Esophagus muscularis mucosa (tissue), 4 donors: ENCODE measurements at regions of chr6 and their contacts with region 1.

Region 1: GRCh38 chr6:46090115-46091079 is 39.4 kb upstream of the ENPP4 start:
- DNase-seq: no peak
- H3K4me3 ChIP-seq: no peak overlapping the region
- H3K27ac ChIP-seq: no peak overlapping the region
- H3K4me1 ChIP-seq: no peaks in the 10 kb centered on the region
- H3K27me3 ChIP-seq: no peaks in the 10 kb centered on the region
- CTCF ChIP-seq: peak; percentile 67 to 78 (median 76)
- EP300 ChIP-seq: no peak
- POLR2A ChIP-seq: no peak

Region 2: GRCh38 chr6:46410334-46410953 is 320.0 kb after region 1 on chr6:
- intact Hi-C with region 1: loop called (anchors 5 kb)
- DNase-seq: no peak
- H3K4me3 ChIP-seq: no peak overlapping the region
- H3K27ac ChIP-seq: peak overlapping the region in 2 of 4 donors; percentile 22 to 37
- H3K4me1 ChIP-seq: peaks cover 33 to 47% (median 44%) of the 10 kb centered on the region in 4 donors
- H3K27me3 ChIP-seq: no peaks in the 10 kb centered on the region
- CTCF ChIP-seq: peak; percentile 83 to 86 (median 86)
- EP300 ChIP-seq: no peak
- POLR2A ChIP-seq: no peak

Region 3: DNA sequence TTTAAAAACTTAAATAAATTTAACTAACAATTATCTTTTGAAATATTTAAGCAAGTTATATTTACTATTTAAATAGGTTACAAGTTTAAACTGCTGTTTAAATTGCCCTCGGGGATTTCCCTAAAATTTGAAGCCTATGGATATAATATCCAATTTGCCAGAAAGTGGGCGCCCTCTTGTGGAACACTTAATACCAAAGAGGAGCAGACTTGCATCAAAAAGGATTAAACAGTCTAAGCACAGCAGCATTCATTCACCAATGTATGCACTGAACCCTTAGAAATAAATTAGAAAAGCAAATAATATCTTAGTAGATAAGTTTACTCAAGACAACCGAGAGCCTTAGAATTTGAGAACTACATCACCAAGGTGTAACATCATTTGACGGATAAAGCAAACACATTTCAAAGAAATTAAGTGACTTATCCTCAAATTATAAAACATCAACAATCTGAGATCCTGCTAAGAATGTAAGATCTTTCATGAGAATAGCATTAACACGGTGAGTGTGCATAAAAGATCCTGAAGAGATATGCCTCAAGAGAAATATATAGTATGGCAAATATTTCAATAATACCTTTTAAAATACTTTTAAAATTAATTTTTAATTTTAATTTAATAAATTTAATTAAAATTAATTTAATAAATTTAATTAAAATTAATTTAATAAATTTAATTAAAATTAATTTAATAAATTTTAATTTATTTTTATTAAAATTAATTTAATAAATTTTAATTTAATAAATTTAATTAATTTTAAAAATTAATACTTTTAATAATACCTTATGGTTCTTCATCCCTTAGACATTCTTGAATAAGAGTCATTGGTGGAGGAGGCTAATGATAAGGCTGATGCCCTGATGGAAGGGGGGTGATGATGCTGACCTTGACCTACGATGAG is 691.3 kb after region 1 on chr6:
- intact Hi-C with region 1: loop called (anchors 5 kb)
- DNase-seq: no peak
- H3K4me3 ChIP-seq: no peak overlapping the region
- H3K27ac ChIP-seq: no peak overlapping the region
- H3K4me1 ChIP-seq: no peaks in the 10 kb centered on the region
- H3K27me3 ChIP-seq: no peaks in the 10 kb centered on the region
- CTCF ChIP-seq: peak; percentile 37 to 62 (median 47)
- EP300 ChIP-seq: no peak
- POLR2A ChIP-seq: no peak